SK-N-SH (cell line): ENCODE measurements at regions of chr1 and their contacts with region 1.

Region 1: DNA sequence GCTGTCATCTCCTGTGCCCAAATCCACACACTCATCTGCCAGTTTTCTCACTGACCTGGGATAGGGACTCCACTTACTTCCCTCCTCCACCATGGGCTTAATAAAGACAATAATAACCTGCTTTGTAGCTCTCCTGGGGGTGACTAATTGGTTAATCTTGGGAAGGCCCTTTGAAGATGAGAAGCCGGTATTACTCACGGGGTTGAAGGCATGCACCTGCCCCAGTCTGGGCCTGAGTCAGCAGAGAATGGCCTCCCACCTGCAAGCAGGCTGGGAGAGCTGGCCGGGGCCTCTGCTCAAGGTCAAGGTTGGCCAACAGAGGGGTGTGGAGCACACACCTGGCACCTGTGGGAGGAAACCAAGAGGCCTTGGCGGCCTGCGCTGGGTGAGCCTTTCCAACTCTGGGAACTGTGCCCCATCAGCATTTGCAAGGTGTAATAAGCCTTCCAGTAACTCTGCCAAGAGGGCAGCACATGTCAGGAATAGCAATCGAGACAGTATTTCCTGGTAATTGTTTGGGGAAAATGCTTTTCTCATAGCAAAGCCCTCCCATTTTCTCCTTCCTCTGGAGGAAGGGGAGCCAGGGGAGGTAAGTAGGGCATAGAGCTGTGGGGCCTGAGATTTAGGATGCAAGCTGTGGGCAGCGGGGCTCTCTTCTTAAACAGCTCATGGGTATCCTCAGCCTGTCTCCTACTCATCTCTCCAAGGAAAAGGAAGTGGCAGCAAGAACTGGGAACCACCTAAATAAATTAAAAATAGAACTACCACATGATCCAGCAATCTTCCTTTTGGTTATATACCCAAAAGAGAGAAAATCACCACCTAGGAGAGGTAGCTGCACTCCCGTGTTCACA is 49.0 kb downstream of the TOMM20 start:
- DNase-seq: no peak
- H3K4me3 ChIP-seq: no peak overlapping the region
- H3K27ac ChIP-seq: no peak overlapping the region
- H3K4me1 ChIP-seq: peaks cover 28 to 31% of the 10 kb centered on the region in 2 experiments; a peak in 3 of 4 replicates
- H3K27me3 ChIP-seq: no peaks in the 10 kb centered on the region
- CTCF ChIP-seq: no peak
- EP300 ChIP-seq: no peak
- RAD21 ChIP-seq: no peak

Region 2: DNA sequence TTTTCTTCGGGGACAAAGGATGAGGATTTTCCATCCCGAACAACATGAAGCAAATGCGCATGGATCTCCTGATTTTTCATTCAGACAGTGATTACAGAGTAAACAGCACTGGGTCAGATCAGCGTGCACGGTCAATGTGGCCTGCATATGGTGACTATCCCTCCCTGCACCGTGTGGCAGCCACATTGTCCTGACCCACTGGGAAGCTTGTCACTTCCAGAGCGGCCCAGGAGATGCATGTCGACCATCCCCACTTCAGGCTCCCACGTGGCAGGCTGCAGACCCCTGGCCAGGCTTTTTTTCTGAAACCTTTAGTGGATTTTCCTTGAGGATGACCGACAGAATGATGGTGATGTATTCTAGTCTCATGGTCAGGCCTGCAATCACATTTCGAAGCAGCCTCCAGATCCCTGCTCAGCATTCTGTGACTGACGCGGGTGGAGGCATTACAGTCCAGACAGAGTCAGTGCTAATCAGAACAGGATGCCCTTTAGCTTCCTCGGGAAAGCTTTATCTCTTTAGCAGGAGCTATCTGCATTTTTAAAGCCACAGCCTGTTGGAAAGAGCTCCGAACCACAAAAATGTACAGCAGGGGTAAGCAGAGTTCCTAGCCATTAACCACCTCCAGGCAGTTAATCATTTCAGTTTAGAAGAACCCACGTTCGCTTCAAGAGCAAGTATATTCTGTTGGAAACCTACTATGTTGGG is 526.4 kb before region 1 on chr1:
- CTCF ChIA-PET with region 1: interaction called, 14 read pairs
- POLR2A ChIA-PET with region 1: interaction called, 3 read pairs
- DNase-seq: peak; percentile 82
- H3K4me3 ChIP-seq: no peak overlapping the region
- H3K27ac ChIP-seq: peak overlapping the region; percentile 82 to 100
- H3K4me1 ChIP-seq: peaks cover 17 to 53% of the 10 kb centered on the region in 2 experiments
- H3K27me3 ChIP-seq: no peaks in the 10 kb centered on the region
- CTCF ChIP-seq: no peak
- EP300 ChIP-seq: peak; percentile 84 to 92; a peak in 3 of 4 replicates
- RAD21 ChIP-seq: peak; percentile 51

Region 3: GRCh38 chr1:234599617-234600417 is 479.9 kb before region 1 on chr1:
- CTCF ChIA-PET with region 1: interaction called, 46 read pairs
- POLR2A ChIA-PET with region 1: interaction called, 7 read pairs
- DNase-seq: peak; percentile 93
- H3K4me3 ChIP-seq: peak overlapping the region; percentile 52 to 57
- H3K27ac ChIP-seq: peak overlapping the region; percentile 98 to 100
- H3K4me1 ChIP-seq: peaks cover 39 to 58% of the 10 kb centered on the region in 2 experiments
- H3K27me3 ChIP-seq: no peaks in the 10 kb centered on the region
- CTCF ChIP-seq: 0 out of 2 replicates have a peak, but pooled peaks have one; percentile 5
- EP300 ChIP-seq: no peak
- RAD21 ChIP-seq: no peak

Region 4: DNA sequence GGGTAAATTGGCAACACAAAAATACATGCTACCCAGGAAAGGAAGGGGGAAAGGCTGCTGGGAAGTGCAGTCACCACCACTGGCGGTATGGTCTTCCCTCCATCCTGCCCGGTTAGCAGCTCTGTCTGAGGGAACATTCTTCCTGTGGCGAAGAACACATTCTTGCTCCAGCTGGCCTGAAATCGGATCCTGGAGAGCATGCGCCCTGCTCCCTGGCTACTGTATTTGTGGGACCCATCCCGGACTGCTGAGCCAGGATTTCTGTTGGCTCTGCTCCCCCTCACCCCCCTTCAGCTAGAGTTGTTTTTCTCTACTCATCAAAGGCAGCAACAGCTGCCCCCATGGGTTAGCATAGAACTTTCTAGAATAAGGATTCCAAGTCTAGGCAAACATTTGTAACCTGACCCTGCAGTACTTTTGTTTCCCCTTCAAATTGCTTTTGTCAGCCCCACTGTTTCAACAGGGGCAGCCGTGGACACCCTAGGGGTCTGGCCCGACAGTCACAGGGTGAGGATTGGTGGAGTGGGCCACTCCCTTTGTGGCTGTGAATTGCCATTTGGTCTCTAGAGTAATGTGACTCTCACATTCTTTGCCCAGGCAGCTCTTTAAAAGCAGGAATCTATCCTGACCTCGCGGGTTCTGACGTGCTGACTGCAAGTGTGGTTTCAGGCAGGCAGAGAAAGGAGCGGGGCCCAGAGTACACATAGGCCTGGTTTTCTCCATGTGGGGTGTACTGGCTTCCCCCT is 108.8 kb before region 1 on chr1:
- CTCF ChIA-PET with region 1: interaction called, 19 read pairs
- POLR2A ChIA-PET with region 1: no interaction called
- DNase-seq: peak; percentile 54
- H3K4me3 ChIP-seq: peak overlapping the region in 1 of 2 experiments; percentile 25; a peak in 1 of 4 replicates
- H3K27ac ChIP-seq: peak overlapping the region; percentile 89 to 98
- H3K4me1 ChIP-seq: peaks cover 32 to 42% of the 10 kb centered on the region in 2 experiments
- H3K27me3 ChIP-seq: no peaks in the 10 kb centered on the region
- CTCF ChIP-seq: no peak
- EP300 ChIP-seq: peak; percentile 1 to 32; a peak in 1 of 4 replicates
- RAD21 ChIP-seq: no peak

Region 5: GRCh38 chr1:235067263-235068172 is 12.2 kb before region 1 on chr1:
- CTCF ChIA-PET with region 1: interaction called, 14 read pairs
- POLR2A ChIA-PET with region 1: no interaction called
- DNase-seq: no peak
- H3K4me3 ChIP-seq: 0 out of 4 replicates have a peak overlapping the region, but pooled peaks of 1 of the 2 experiments have one; percentile 14
- H3K27ac ChIP-seq: peak overlapping the region; percentile 13 to 63; a peak in 3 of 4 replicates
- H3K4me1 ChIP-seq: peaks cover 16 to 25% of the 10 kb centered on the region in 2 experiments; a peak in 3 of 4 replicates
- H3K27me3 ChIP-seq: no peaks in the 10 kb centered on the region
- CTCF ChIP-seq: no peak
- EP300 ChIP-seq: peak in 1 of 2 experiments; percentile 85; a peak in 2 of 4 replicates
- RAD21 ChIP-seq: no peak